WTC11 (cell line): ENCODE measurements at regions of chr14 and their contacts with region 1.

Region 1: GRCh38 chr14:99320105-99320572 is 48.1 kb upstream of the BCL11B start:
- DNase-seq: peak; percentile 85
- ATAC-seq: peak; percentile 87
- H3K4me3 Mint-ChIP-seq: no peak overlapping the region
- H3K27ac Mint-ChIP-seq: no peak overlapping the region
- H3K4me1 Mint-ChIP-seq: peaks cover 19% of the 10 kb centered on the region
- H3K27me3 Mint-ChIP-seq: no peaks in the 10 kb centered on the region
- CTCF ChIP-seq: peak; percentile 95

Region 2: DNA sequence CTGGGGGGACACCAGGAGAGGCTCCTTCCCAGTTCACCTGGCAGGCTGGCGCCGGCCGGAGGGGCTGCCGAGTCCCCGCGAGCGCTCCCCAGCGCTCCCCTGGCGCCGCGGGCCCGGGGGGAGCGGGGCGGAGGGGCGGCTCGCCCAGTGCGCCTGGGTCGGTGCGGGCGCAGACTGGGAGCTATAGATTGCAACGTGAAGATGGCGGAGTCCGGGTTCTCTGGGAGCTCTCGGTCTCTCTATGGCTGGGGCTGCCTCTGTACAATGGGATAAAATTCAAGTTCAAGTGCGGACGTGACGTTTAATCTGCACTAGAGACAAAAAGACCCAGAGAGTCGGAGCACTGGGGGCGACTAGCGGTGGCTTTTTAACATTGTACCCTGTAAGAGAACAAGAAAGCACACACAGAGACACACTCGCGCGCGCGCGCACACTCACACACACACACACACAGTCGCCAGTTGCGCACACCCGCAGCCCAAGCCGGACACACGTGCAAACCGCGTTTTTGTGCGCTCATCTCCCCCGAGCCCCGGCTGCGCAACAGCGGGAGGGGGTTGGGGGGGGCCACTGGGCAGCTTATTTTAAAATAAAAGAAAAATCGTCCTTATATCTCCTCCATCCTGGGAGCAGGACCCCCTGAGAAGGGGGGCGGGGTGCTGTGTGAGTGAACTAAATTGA is 48.0 kb before region 1 on chr14 and contains the start of gene BCL11B:
- CTCF ChIA-PET with region 1: interaction called, 26 read pairs
- POLR2A ChIA-PET with region 1: no interaction called
- DNase-seq: peak; percentile 78
- ATAC-seq: peak; percentile 14
- H3K4me3 Mint-ChIP-seq: peak within 1 kb of the TSS; percentile 84
- H3K27ac Mint-ChIP-seq: peak within 1 kb of the TSS; percentile 50
- H3K4me1 Mint-ChIP-seq: peaks cover 41% of the 10 kb centered on the region
- H3K27me3 Mint-ChIP-seq: no peaks in the 10 kb centered on the region; the same call in 1 of the 2 replicates
- CTCF ChIP-seq: no peak
- total RNA-seq, gene BCL11B: 6.7 to 9.1 TPM (median 7.2 TPM) in 3 replicates

Region 3: DNA sequence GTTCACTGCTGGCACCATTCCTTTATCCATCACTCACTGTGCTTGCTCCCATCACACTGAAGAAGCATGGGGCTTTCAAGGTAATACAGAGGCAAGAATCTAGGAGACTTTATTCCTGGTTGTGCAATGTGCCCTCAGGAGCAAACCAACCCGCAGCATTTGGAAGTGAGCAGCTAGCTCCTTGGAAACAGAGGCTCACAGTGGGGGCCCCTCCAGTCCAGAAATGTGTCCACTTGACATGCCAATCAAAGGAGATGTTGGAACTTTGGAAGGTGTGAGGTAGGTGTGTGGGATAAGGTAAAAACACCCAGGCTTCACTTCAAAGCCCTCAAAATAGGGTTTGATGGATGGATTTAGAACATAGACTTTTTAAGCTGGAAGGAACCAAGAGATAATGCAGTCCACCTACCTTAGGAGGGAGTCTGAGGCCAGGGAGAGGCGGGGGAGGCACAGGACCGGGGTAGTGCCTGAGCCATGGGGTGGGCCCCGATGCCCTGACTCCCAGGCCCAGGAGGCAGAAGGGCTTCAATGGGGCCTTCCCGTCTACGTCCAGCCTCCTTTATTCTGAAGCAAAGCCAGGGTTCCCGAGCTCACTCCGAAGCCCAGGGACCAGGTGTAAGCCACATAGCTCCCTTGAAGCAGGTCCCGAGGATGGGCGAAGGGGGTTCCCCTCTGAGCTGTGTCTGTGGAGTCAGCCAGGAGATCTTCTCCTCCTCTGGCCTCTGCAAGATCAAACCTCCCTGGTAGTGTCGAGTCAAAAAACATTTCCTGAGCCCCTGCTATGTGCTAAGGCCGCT is 30.5 kb before region 1 on chr14:
- CTCF ChIA-PET with region 1: interaction called, 29 read pairs
- POLR2A ChIA-PET with region 1: no interaction called
- DNase-seq: no peak
- ATAC-seq: no peak
- H3K4me3 Mint-ChIP-seq: no peak overlapping the region
- H3K27ac Mint-ChIP-seq: no peak overlapping the region
- H3K4me1 Mint-ChIP-seq: peaks cover 7% of the 10 kb centered on the region
- H3K27me3 Mint-ChIP-seq: no peaks in the 10 kb centered on the region; the same call in 1 of the 2 replicates
- CTCF ChIP-seq: no peak

Region 4: DNA sequence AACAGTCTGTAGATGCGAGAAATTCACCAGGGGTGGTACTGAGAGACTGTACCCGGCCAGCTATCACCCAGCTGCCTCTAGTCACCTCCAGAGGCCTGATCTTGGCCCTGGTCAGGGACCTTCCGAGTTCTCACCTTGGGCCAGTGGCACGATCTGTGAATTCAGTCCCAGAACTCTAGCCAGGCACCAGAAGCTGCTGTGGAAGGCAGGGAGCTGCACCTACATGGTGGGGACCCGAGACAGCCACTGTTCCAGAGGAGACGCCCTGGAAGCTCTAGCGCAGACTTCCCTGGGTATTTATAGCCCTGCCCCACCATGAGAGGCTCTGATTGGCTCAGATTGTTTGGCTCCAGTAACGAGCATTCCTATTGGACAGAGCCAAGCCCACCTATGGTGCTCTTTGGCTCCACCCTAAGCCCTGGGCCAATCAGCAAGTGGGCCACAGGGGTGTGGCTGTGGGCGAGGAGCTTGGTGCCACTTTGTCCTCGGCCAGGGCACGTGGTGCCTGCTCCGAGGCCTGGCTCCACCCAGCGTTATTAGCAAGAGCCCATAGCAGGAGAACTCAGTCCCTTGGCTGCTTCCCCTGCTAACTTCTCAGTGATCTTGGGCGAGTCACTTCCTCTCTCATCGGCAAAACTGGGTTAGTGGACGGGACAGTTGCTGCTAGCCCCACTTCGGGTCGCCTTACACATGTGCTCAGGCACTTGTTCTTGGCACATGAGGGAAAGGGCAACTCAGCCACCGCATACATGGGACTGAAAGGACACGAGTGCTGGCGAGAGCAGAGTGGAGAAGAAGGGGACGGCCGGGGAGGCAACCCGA is 40.8 kb after region 1 on chr14:
- CTCF ChIA-PET with region 1: interaction called, 34 read pairs
- POLR2A ChIA-PET with region 1: no interaction called
- DNase-seq: no peak
- ATAC-seq: no peak
- H3K4me3 Mint-ChIP-seq: no peak overlapping the region
- H3K27ac Mint-ChIP-seq: no peak overlapping the region
- H3K4me1 Mint-ChIP-seq: peaks cover 23% of the 10 kb centered on the region
- H3K27me3 Mint-ChIP-seq: peaks cover 7% of the 10 kb centered on the region; the same call in 1 of the 2 replicates
- CTCF ChIP-seq: no peak

Region 5: GRCh38 chr14:99401621-99402284 is 81.6 kb after region 1 on chr14:
- CTCF ChIA-PET with region 1: interaction called, 24 read pairs
- POLR2A ChIA-PET with region 1: no interaction called
- DNase-seq: no peak
- ATAC-seq: peak; percentile 99
- H3K4me3 Mint-ChIP-seq: no peak overlapping the region
- H3K27ac Mint-ChIP-seq: no peak overlapping the region; the same call in 1 of the 2 replicates
- H3K4me1 Mint-ChIP-seq: peaks cover 17% of the 10 kb centered on the region
- H3K27me3 Mint-ChIP-seq: no peaks in the 10 kb centered on the region
- CTCF ChIP-seq: no peak

Region 6: GRCh38 chr14:99755629-99756603 is 435.8 kb after region 1 on chr14:
- CTCF ChIA-PET with region 1: no interaction called
- POLR2A ChIA-PET with region 1: no interaction called
- DNase-seq: no peak
- ATAC-seq: no peak
- H3K4me3 Mint-ChIP-seq: no peak overlapping the region
- H3K27ac Mint-ChIP-seq: no peak overlapping the region
- H3K4me1 Mint-ChIP-seq: peaks cover 31% of the 10 kb centered on the region
- H3K27me3 Mint-ChIP-seq: no peaks in the 10 kb centered on the region; the same call in 1 of the 2 replicates
- CTCF ChIP-seq: no peak